Cardiac septum (tissue), 1 donor: ENCODE measurements at regions of chr9 and their contacts with region 1.

Region 1: DNA sequence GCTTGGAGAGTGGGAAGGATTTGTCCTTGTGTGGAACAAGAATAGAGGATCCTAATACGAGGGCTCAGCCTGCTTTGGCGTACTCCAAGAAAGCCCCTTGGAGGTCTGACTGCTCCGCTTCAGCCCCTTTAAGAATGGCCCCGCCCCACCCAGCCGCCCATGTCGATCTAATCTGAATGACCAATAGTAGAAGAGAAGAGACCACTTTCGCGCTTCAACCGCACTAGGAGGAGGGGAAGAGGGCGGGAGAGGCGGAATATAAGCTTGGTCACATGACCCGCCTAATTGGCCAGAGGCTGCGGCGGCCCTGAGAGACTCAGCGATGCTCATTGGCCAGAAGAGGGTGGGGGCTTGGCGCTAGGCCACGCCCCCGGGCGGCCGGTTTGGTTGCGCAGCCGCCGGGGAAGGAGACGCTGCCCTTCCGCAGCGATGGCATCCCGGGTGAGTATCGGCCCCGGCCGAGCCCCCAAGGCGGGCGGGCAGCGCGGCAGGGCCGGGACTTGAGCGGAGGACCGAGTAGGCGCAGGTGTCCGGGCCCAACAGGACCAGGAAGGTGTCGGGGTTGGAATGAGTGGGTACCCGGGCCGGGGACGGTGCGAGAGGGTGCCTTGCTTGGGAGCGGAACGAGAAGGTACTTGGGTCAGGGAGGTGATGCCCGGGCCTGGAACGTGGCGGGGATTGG is at the start of gene MIGA2:
- DNase-seq: peak; percentile 98
- total RNA-seq, gene MIGA2: 39.3 TPM

Region 2: GRCh38 chr9:129110740-129111527 is 74.6 kb after region 1 on chr9 and contains the starts of genes CRAT and PTPA:
- intact Hi-C with region 1: loop called (anchors 2 kb)
- DNase-seq: peak; percentile 100
- total RNA-seq, gene CRAT: 68.1 TPM
- total RNA-seq, gene PTPA: 204 TPM